IMR-90 (cell line): ENCODE measurements at regions of chr4 and their contacts with region 1.

Region 1: GRCh38 chr4:98838977-98839618 is 89.8 kb downstream of the EIF4E start:
- DNase-seq: peak; percentile 15
- ATAC-seq: no peak
- H3K4me3 ChIP-seq: no peak overlapping the region
- H3K27ac ChIP-seq: no peak overlapping the region
- H3K4me1 ChIP-seq: no peaks in the 10 kb centered on the region
- H3K27me3 ChIP-seq: no peaks in the 10 kb centered on the region
- CTCF ChIP-seq: no peak
- POLR2A ChIP-seq: no peak
- RAD21 ChIP-seq: no peak

Region 2: DNA sequence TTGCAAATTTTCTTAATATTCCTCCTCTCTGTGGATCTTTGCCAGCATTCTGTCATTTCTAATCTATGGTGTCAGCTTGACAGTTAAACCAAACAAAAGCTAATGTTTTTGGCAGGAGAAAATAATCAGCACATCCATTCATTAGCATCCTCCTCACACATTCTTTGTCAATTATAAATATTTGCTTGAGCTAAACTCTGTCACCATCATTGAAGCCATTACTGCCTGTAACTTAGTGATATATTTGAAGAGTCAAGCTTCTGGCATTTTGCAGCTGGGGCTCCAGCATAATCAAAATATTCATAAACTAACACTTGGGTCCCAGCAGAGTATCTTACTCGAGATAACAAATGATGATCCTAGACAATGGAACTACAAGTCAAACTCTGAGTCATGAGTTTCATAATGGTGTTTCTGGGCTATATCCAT is 36.3 kb before region 1 on chr4:
- CTCF ChIA-PET with region 1: no interaction called
- POLR2A ChIA-PET with region 1: no interaction called
- dilution Hi-C with region 1: no loop called
- in situ Hi-C with region 1: no loop called
- intact Hi-C with region 1: loop called (anchors 1 kb)
- DNase-seq: peak; percentile 8
- ATAC-seq: no peak; the same call in 1 of the 2 replicates
- H3K4me3 ChIP-seq: no peak overlapping the region
- H3K27ac ChIP-seq: no peak overlapping the region
- H3K4me1 ChIP-seq: no peaks in the 10 kb centered on the region
- H3K27me3 ChIP-seq: peaks cover 7% of the 10 kb centered on the region
- CTCF ChIP-seq: no peak
- POLR2A ChIP-seq: no peak
- RAD21 ChIP-seq: no peak